ENCODE measurements at regions of chr2 and their contacts with region 1.

Region 1: GRCh38 chr2:197477797-197478196 is 21.8 kb downstream of the HSPD1 start:
- DNase-seq: no peak
- ATAC-seq: no peak
- H3K4me3 ChIP-seq: no peak overlapping the region
- H3K27ac ChIP-seq: no peak overlapping the region
- H3K4me1 ChIP-seq: no peaks in the 10 kb centered on the region
- H3K27me3 ChIP-seq: no peaks in the 10 kb centered on the region
- CTCF ChIP-seq: no peak

Region 2: DNA sequence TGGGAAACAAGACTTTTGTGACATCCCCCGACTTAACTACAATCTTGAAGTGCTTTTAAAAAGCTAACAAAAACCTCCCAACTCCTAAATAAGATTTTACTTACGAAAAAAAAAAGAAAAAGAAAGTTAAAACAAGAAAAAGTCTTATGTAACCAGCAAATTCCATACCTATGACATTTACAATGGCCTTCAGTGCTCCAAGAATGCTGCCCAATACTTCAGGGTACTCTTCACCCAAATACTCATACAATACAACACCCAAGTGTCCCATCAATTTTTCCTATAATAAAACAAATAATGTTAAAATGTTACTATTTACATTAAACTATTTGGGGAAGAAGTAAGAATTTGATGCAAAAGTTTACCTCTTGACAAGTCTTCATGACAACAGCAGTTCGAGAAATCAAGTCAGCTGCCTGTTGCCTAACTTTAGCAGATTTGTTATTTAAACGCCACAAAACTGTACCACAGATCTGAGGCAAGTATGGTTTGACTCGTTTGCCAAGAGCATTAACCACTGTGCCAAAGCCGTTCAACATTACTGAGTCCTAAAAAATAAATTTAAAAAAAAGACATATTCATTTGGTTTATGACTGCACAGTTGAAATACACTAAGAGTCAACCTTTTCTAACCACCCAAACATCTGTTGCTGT is 77.8 kb before region 1 on chr2:
- intact Hi-C with region 1: loop called in 1 of 3 experiments (anchors 10 kb)
- DNase-seq: no peak
- ATAC-seq: no peak
- H3K4me3 ChIP-seq: no peak overlapping the region
- H3K27ac ChIP-seq: no peak overlapping the region
- H3K4me1 ChIP-seq: no peaks in the 10 kb centered on the region
- H3K27me3 ChIP-seq: no peaks in the 10 kb centered on the region
- CTCF ChIP-seq: no peak

Region 3: DNA sequence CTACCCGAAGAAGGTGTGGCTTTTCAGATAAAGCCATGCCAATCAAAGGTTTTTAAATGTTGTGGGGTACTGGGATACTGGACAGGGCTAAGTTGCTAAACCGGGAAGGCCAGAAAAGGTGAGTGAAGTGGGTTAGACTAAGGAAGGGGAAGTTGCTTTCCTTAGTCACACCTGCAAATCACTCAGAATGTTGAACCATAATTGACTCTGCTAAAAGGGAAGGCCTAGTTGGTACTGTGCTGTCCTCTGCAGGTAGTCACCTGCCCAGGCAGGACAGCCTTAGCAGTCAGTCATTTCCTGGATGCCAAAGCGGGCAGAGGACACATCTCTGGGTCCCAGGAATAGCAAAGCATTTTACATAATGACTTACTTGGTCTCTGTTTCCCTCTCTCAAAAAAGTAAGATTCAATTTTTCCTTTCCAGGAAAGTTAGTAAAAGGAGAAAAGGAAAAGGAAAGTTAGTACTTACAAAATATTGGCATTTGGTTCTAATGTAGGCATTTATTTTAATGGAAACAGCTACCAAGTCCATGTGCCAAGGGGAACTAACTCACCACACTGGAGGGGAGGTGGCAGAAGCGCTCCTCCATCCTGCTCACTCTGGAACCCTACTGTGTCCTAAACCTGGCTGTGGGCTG is 137.3 kb after region 1 on chr2:
- intact Hi-C with region 1: no loop called
- DNase-seq: no peak
- ATAC-seq: peak in 3 of 4 donors; percentile 45 to 53 (median 52)
- H3K4me3 ChIP-seq: no peak overlapping the region
- H3K27ac ChIP-seq: no peak overlapping the region
- H3K4me1 ChIP-seq: no peaks in the 10 kb centered on the region
- H3K27me3 ChIP-seq: no peaks in the 10 kb centered on the region
- CTCF ChIP-seq: no peak

Measured in pancreas (tissue), 10 donors.